ENCODE measurements at regions of chr22 and their contacts with region 1.

Region 1: GRCh38 chr22:43855431-43855830 is 6.9 kb downstream of the SULT4A1 start:
- DNase-seq: no peak
- H3K4me3 ChIP-seq: no peak overlapping the region
- H3K4me3 Mint-ChIP-seq: no peak overlapping the region
- H3K27ac ChIP-seq: no peak overlapping the region
- H3K27ac Mint-ChIP-seq: no peak overlapping the region
- H3K4me1 ChIP-seq: no peaks in the 10 kb centered on the region
- H3K4me1 Mint-ChIP-seq: no peaks in the 10 kb centered on the region
- H3K27me3 ChIP-seq: peaks cover under 1% of the 10 kb centered on the region
- H3K27me3 Mint-ChIP-seq: peaks cover 33 to 62% of the 10 kb centered on the region in 2 donors

Region 2: GRCh38 chr22:42836026-42836425 is 1019.4 kb before region 1 on chr22:
- CTCF ChIA-PET with region 1: no interaction called
- POLR2A ChIA-PET with region 1: interaction called, 12 read pairs
- DNase-seq: no peak
- H3K4me3 ChIP-seq: no peak overlapping the region
- H3K4me3 Mint-ChIP-seq: no peak overlapping the region
- H3K27ac ChIP-seq: no peak overlapping the region
- H3K27ac Mint-ChIP-seq: no peak overlapping the region
- H3K4me1 ChIP-seq: no peaks in the 10 kb centered on the region
- H3K4me1 Mint-ChIP-seq: peaks cover 6 to 11% (median 7%) of the 10 kb centered on the region in 3 donors
- H3K27me3 ChIP-seq: no peaks in the 10 kb centered on the region
- H3K27me3 Mint-ChIP-seq: no peaks in the 10 kb centered on the region

Region 3: GRCh38 chr22:43844560-43845545 is 10.6 kb before region 1 on chr22:
- CTCF ChIA-PET with region 1: no interaction called
- POLR2A ChIA-PET with region 1: no interaction called
- DNase-seq: peak in 1 of 5 donors; percentile 30
- H3K4me3 ChIP-seq: no peak overlapping the region
- H3K4me3 Mint-ChIP-seq: no peak overlapping the region
- H3K27ac ChIP-seq: no peak overlapping the region
- H3K27ac Mint-ChIP-seq: no peak overlapping the region
- H3K4me1 ChIP-seq: no peaks in the 10 kb centered on the region
- H3K4me1 Mint-ChIP-seq: no peaks in the 10 kb centered on the region
- H3K27me3 ChIP-seq: no peaks in the 10 kb centered on the region
- H3K27me3 Mint-ChIP-seq: peaks cover 9 to 22% of the 10 kb centered on the region in 2 donors

Region 4: DNA sequence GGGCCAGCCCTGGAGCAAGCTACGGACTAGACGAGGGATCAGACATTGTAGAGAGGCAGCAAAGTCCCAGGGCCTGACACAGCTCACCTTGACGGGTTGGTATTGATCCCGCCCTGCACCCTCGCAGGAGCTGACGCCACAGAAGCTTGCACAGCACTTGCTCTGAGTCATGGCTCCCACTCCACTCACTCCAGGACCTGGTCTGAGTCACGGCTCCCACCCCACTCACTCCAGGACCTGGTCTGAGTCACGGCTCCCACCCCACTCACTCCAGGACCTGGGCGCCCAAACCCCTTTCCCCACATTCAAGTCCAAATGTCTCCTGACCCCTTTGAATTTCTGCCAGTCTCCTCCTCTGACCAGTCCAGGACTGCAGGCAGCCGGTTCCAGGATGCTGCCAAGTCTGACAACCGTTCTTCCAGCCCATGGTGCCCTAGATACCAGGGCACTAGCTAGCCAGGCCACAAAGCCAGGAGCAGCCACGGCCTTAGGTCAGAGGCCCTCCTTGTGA is 42.4 kb after region 1 on chr22:
- CTCF ChIA-PET with region 1: no interaction called
- POLR2A ChIA-PET with region 1: no interaction called
- DNase-seq: no peak
- H3K4me3 ChIP-seq: no peak overlapping the region
- H3K4me3 Mint-ChIP-seq: no peak overlapping the region
- H3K27ac ChIP-seq: no peak overlapping the region
- H3K27ac Mint-ChIP-seq: no peak overlapping the region
- H3K4me1 ChIP-seq: no peaks in the 10 kb centered on the region
- H3K4me1 Mint-ChIP-seq: no peaks in the 10 kb centered on the region
- H3K27me3 ChIP-seq: peaks cover 3% of the 10 kb centered on the region
- H3K27me3 Mint-ChIP-seq: peaks cover 19 to 29% of the 10 kb centered on the region in 2 donors

Measured in CD8-positive, alpha-beta memory T cell (primary cell).